CD8-positive, alpha-beta T cell (primary cell): ENCODE measurements at regions of chr22 and their contacts with region 1.

Region 1: GRCh38 chr22:28019881-28020871 is 101.1 kb upstream of the PITPNB start:
- DNase-seq: peak; percentile 48 to 77 (median 62)
- ATAC-seq: peak; percentile 88
- H3K4me3 ChIP-seq: no peak overlapping the region
- H3K4me3 Mint-ChIP-seq: no peak overlapping the region
- H3K27ac ChIP-seq: no peak overlapping the region
- H3K27ac Mint-ChIP-seq: no peak overlapping the region
- H3K4me1 ChIP-seq: no peaks in the 10 kb centered on the region
- H3K4me1 Mint-ChIP-seq: no peaks in the 10 kb centered on the region
- H3K27me3 ChIP-seq: no peaks in the 10 kb centered on the region
- H3K27me3 Mint-ChIP-seq: no peaks in the 10 kb centered on the region
- CTCF ChIP-seq: peak; percentile 73

Region 2: DNA sequence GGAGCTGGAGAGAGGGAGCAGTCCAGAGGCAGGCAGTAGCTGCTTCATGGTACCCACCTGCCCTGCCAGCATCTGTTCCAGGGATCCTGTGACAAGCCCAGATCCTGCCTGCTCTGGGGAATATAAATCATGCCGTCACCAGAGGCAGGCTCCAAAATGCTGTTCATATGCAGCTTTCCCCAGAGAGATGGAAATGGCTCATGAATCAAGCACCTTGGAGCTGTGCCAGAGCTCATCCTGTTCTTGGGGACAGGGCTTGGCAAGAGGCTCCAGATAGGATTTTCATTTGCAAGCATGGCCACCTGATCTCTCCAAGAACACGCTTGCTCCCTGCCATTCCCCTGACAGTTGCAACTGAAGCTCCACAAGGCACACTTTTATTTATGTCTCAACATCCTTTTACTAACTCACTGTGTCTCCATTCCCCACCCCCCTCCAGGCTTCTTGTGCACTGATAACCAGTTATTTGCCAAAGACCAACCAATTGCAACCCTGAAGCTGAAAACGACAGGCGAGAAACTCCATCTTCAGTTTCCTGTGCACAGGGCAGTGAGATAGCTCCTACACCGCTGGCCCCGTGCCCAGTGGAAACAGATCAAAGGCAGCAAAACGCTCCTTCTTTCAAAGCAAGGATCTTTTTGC is 14.7 kb after region 1 on chr22:
- CTCF ChIA-PET with region 1: interaction called, 24 read pairs
- POLR2A ChIA-PET with region 1: no interaction called
- intact Hi-C with region 1: no loop called
- DNase-seq: peak in 2 of 9 experiments; percentile 35 to 37
- ATAC-seq: no peak
- H3K4me3 ChIP-seq: no peak overlapping the region
- H3K4me3 Mint-ChIP-seq: no peak overlapping the region
- H3K27ac ChIP-seq: no peak overlapping the region
- H3K27ac Mint-ChIP-seq: no peak overlapping the region
- H3K4me1 ChIP-seq: peaks cover 8% of the 10 kb centered on the region
- H3K4me1 Mint-ChIP-seq: peaks cover 12% of the 10 kb centered on the region
- H3K27me3 ChIP-seq: no peaks in the 10 kb centered on the region
- H3K27me3 Mint-ChIP-seq: peaks cover 16% of the 10 kb centered on the region
- CTCF ChIP-seq: no peak

Region 3: DNA sequence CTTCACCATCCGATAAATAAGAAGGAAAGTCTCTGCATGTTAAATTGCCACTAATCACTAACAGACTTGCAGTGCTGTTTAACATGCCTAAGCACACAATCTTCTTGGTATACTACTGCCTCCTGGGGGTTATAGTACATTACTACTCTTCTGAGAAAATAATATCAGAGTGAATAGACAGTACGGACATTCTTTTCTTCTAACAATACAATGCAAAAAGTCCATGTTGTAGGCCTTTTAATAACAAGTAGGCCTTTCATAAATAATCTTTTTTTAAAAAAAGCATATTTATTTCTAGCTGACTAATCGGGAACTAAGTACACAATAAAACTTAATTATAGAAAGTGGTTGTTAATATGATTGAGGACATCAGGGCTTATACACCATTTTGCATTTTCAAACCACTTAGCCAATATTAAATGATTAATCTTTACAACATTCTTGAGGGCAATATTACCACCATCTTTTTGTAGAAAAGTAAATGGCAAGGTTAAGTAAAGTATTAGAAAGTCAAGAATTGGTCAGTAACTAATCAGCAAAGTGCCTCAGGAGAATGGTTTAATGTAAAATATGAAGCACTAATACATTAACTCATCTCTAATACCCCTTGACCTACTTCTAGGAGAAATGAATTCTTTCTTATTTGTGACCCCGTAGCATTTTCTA is 574.8 kb after region 1 on chr22:
- CTCF ChIA-PET with region 1: interaction called, 35 read pairs
- POLR2A ChIA-PET with region 1: no interaction called
- intact Hi-C with region 1: loop called in 1 of 2 experiments (anchors 1 kb)
- DNase-seq: peak in 2 of 9 experiments; percentile 38 to 56
- ATAC-seq: peak; percentile 76
- H3K4me3 ChIP-seq: no peak overlapping the region
- H3K4me3 Mint-ChIP-seq: no peak overlapping the region
- H3K27ac ChIP-seq: no peak overlapping the region
- H3K27ac Mint-ChIP-seq: no peak overlapping the region
- H3K4me1 ChIP-seq: no peaks in the 10 kb centered on the region
- H3K4me1 Mint-ChIP-seq: no peaks in the 10 kb centered on the region
- H3K27me3 ChIP-seq: no peaks in the 10 kb centered on the region
- H3K27me3 Mint-ChIP-seq: peaks cover 21% of the 10 kb centered on the region
- CTCF ChIP-seq: peak; percentile 79

Region 4: GRCh38 chr22:28841111-28841510 is 820.9 kb after region 1 on chr22:
- CTCF ChIA-PET with region 1: no interaction called
- POLR2A ChIA-PET with region 1: no interaction called
- intact Hi-C with region 1: loop called in 1 of 2 experiments (anchors 10 kb)
- DNase-seq: no peak
- ATAC-seq: no peak
- H3K4me3 ChIP-seq: no peak overlapping the region
- H3K4me3 Mint-ChIP-seq: no peak overlapping the region
- H3K27ac ChIP-seq: no peak overlapping the region
- H3K27ac Mint-ChIP-seq: no peak overlapping the region
- H3K4me1 ChIP-seq: no peaks in the 10 kb centered on the region
- H3K4me1 Mint-ChIP-seq: no peaks in the 10 kb centered on the region
- H3K27me3 ChIP-seq: no peaks in the 10 kb centered on the region
- H3K27me3 Mint-ChIP-seq: no peaks in the 10 kb centered on the region
- CTCF ChIP-seq: no peak

Region 5: GRCh38 chr22:29245637-29246385 is 1225.6 kb after region 1 on chr22:
- CTCF ChIA-PET with region 1: no interaction called
- POLR2A ChIA-PET with region 1: no interaction called
- intact Hi-C with region 1: loop called in 1 of 2 experiments (anchors 10 kb)
- DNase-seq: peak; percentile 43 to 79 (median 66)
- ATAC-seq: peak; percentile 91
- H3K4me3 ChIP-seq: no peak overlapping the region
- H3K4me3 Mint-ChIP-seq: no peak overlapping the region
- H3K27ac ChIP-seq: no peak overlapping the region
- H3K27ac Mint-ChIP-seq: no peak overlapping the region
- H3K4me1 ChIP-seq: no peaks in the 10 kb centered on the region
- H3K4me1 Mint-ChIP-seq: no peaks in the 10 kb centered on the region
- H3K27me3 ChIP-seq: no peaks in the 10 kb centered on the region
- H3K27me3 Mint-ChIP-seq: peaks cover 20% of the 10 kb centered on the region
- CTCF ChIP-seq: peak; percentile 90